ENCODE measurements at regions of chr4 and their contacts with region 1.

Region 1: DNA sequence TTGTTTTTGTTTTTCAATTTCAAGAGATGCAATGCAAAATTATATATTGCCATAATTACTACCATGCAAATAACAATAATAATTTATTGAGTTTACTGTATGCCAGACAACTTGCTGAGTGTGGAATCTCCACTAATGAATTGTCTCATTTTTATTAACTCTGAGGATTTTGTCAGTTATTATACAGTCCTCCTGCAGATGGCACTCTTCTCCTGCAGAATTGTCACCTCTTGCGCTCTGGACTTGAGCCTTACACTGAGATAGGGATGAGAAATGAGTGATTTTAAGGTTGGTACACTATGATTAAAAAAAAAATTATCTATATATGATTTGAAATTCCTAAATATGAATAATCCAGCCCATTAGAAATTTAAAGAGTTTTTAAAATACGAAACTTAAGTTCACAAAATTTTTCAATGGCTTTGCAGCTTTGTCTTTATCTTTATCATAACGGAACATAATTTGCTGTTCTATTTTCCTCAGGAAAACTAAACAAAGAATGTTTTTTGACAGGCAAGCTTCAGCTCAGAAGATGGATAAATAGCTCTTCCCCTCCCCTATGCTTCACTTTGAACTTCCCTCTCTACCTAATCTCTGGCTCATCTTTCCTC is 12.7 kb upstream of the PAQR3 start:
- DNase-seq: no peak
- ATAC-seq: peak; percentile 88
- H3K4me3 ChIP-seq: no peak overlapping the region
- H3K27ac ChIP-seq: no peak overlapping the region
- H3K4me1 ChIP-seq: no peaks in the 10 kb centered on the region
- H3K27me3 ChIP-seq: no peaks in the 10 kb centered on the region
- CTCF ChIP-seq: peak; percentile 54 to 84 (median 62)
- EP300 ChIP-seq: no peak
- POLR2A ChIP-seq: no peak
- RAD21 ChIP-seq: peak; percentile 89

Region 2: DNA sequence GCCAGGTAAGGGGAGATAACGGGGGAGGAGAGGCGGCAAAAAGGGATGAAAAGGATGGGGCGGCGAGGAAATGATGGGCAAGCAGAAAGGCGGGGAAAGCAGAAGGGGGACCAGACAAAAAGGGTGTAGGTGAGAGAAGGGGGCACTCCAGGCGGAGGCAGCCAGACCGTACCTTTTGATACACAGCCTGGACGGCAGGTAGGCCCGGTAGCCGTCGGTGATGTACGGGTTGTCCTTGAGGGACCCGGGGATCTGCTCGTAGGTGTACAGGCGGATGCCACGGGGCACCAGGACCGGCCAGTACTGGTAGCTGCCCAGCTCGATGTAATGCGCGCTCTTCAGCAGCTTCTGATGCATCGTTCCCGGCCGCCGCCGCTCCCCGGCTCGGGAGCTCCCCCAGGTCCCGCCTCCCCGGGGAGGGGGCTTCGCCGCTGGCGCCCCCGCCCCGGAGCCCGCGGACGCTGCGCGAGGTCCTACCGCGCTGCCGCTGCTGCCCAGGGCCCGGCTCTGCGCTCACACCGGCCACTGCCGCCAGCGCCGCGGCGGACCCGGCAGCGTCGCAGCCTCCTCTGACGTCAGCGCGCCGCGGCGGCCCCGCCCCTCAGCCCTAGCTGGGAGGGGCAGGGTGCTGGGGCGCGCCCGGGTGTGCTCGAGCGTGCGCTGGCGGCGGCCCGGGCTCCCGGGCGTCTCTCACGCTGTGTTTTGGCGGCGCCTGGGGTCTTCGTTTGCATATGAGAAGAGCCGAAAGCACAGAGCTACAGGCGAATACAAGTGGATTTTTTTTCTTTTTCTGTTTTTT is 12.9 kb before region 1 on chr4 and contains the start of gene PAQR3:
- CTCF ChIA-PET with region 1: interaction called, 26 read pairs
- POLR2A ChIA-PET with region 1: no interaction called
- RAD21 ChIA-PET with region 1: interaction called, 4 read pairs
- SMC1A ChIA-PET with region 1: interaction called, 20 read pairs
- in situ Hi-C with region 1: no loop called
- intact Hi-C with region 1: no loop called
- DNase-seq: peak; percentile 21
- ATAC-seq: peak; percentile 97
- H3K4me3 ChIP-seq: peak within 1 kb of the TSS; percentile 78
- H3K27ac ChIP-seq: no peak within 1 kb of the TSS; the same call in 1 of the 2 replicates
- H3K4me1 ChIP-seq: no peaks in the 10 kb centered on the region; the same call in 1 of the 2 replicates
- H3K27me3 ChIP-seq: no peaks in the 10 kb centered on the region
- CTCF ChIP-seq: 0 out of 6 replicates have a peak, but pooled peaks of 1 of the 3 experiments have one; percentile 1
- EP300 ChIP-seq: no peak
- POLR2A ChIP-seq: peak; percentile 88
- RAD21 ChIP-seq: no peak
- polyA plus RNA-seq, gene PAQR3: 2.2 to 3.0 TPM

Region 3: DNA sequence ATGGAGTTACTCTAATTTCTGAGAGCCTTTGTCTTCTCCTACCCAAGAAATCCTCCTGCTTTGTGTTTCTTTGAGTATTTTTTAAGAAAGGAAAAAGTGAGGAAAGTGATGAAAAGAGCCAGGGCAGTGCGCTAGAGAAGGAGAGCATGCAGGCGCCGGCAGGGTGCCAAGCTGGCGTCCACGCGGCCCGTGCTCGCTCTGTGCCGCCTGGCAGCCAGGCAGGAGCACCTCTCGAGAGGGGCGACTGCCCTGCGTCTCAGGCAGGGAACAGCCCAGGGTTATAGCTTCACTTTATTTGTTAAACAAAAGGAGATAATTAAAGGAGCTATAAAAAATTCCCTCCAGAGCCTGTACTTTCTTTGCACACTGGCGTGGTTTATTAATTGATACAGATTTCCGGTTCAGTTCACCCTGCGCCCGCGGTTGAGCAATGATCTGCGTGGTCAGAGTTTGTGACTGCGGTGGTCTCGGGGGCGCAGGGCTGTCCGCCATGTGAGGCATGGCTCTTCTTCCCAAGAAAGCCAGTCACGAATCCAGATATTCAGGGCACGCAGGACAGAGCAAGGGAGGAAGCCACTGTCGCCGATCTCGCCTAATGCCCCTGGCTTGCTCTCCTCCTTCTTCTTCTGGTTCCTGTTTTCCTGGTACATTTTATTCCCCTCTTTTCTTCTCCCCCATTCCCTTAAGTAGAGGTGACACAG is 98.0 kb after region 1 on chr4:
- CTCF ChIA-PET with region 1: interaction called, 10 read pairs
- POLR2A ChIA-PET with region 1: no interaction called
- RAD21 ChIA-PET with region 1: no interaction called
- SMC1A ChIA-PET with region 1: interaction called, 6 read pairs
- in situ Hi-C with region 1: no loop called
- intact Hi-C with region 1: no loop called
- DNase-seq: no peak
- ATAC-seq: no peak
- H3K4me3 ChIP-seq: no peak overlapping the region
- H3K27ac ChIP-seq: no peak overlapping the region
- H3K4me1 ChIP-seq: no peaks in the 10 kb centered on the region
- H3K27me3 ChIP-seq: no peaks in the 10 kb centered on the region; a peak in 1 of 4 replicates
- CTCF ChIP-seq: no peak
- EP300 ChIP-seq: no peak
- POLR2A ChIP-seq: no peak
- RAD21 ChIP-seq: no peak

Region 4: GRCh38 chr4:79395841-79396240 is 443.9 kb after region 1 on chr4:
- CTCF ChIA-PET with region 1: interaction called, 6 read pairs
- POLR2A ChIA-PET with region 1: no interaction called
- RAD21 ChIA-PET with region 1: no interaction called
- SMC1A ChIA-PET with region 1: interaction called, 3 read pairs
- in situ Hi-C with region 1: no loop called
- intact Hi-C with region 1: loop called (anchors 10 kb)
- DNase-seq: no peak
- ATAC-seq: no peak
- H3K4me3 ChIP-seq: no peak overlapping the region
- H3K27ac ChIP-seq: no peak overlapping the region
- H3K4me1 ChIP-seq: no peaks in the 10 kb centered on the region
- H3K27me3 ChIP-seq: no peaks in the 10 kb centered on the region
- CTCF ChIP-seq: no peak
- EP300 ChIP-seq: no peak
- POLR2A ChIP-seq: no peak
- RAD21 ChIP-seq: no peak

Region 5: GRCh38 chr4:79917246-79917645 is 965.3 kb after region 1 on chr4:
- CTCF ChIA-PET with region 1: interaction called, 6 read pairs
- POLR2A ChIA-PET with region 1: no interaction called
- RAD21 ChIA-PET with region 1: no interaction called
- SMC1A ChIA-PET with region 1: no interaction called
- in situ Hi-C with region 1: no loop called
- intact Hi-C with region 1: loop called (anchors 10 kb)
- DNase-seq: peak; percentile 8
- ATAC-seq: peak; percentile 92
- H3K4me3 ChIP-seq: no peak overlapping the region
- H3K27ac ChIP-seq: no peak overlapping the region
- H3K4me1 ChIP-seq: no peaks in the 10 kb centered on the region
- H3K27me3 ChIP-seq: no peaks in the 10 kb centered on the region
- CTCF ChIP-seq: peak; percentile 68 to 83 (median 71)
- EP300 ChIP-seq: no peak
- POLR2A ChIP-seq: no peak
- RAD21 ChIP-seq: peak; percentile 71

Region 6: GRCh38 chr4:80215449-80216052 is 1263.6 kb after region 1 on chr4:
- CTCF ChIA-PET with region 1: interaction called, 30 read pairs
- POLR2A ChIA-PET with region 1: no interaction called
- RAD21 ChIA-PET with region 1: interaction called, 10 read pairs
- SMC1A ChIA-PET with region 1: interaction called, 11 read pairs
- in situ Hi-C with region 1: loop called (anchors 10 kb)
- intact Hi-C with region 1: loop called (anchors 5 kb)
- DNase-seq: no peak
- ATAC-seq: peak; percentile 49; the same call in 2 of the 3 replicates
- H3K4me3 ChIP-seq: no peak overlapping the region
- H3K27ac ChIP-seq: no peak overlapping the region
- H3K4me1 ChIP-seq: no peaks in the 10 kb centered on the region
- H3K27me3 ChIP-seq: peaks cover 0 to 7% of the 10 kb centered on the region in 2 experiments; a peak in 2 of 4 replicates
- CTCF ChIP-seq: peak; percentile 41 to 62 (median 58)
- EP300 ChIP-seq: no peak
- POLR2A ChIP-seq: no peak
- RAD21 ChIP-seq: peak; percentile 72